GM23248 (cell line): ENCODE measurements at regions of chr1 and their contacts with region 1.

Region 1: DNA sequence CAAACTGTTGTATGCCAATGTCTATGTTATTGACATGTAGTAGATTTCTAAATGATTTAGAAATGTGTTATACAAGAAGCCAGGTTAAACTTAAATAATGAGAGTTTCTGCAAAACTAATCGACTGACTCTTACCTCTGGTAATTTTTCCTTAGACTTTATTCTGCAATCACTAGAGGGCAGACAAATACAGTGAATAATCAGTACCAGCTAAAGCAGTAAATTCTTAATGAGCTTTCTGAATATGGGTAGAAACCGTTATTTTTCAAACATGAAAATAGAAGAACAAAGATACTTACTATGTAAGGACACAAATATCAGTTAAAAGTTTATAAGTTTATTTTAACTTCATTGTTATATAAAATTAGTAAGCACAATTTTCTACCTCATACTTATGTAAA is 97.9 kb upstream of the RGS1 start:
- DNase-seq: peak; percentile 70
- H3K4me3 ChIP-seq: no peak overlapping the region
- H3K27ac ChIP-seq: no peak overlapping the region
- H3K4me1 ChIP-seq: peaks cover 13% of the 10 kb centered on the region
- H3K27me3 ChIP-seq: no peaks in the 10 kb centered on the region; the same call in 1 of the 2 replicates

Region 2: DNA sequence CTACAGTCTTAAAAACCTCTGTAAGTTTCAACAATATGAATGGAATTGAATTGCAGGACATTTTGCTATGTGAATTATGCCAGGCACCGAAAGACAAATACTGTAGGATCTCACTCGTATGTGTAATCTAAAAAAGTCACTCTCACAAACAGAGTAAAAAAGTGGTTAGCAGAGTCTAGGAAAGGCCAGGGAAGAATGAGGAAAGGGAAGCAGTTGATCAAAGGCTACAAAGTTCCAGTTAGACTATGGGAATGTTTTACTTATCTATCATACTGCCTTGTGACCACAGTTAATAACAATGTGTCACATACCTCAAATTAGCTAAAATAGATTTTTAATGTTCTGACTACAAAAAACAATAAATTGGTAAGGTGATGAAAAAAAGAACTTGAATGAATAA is 1434.6 kb before region 1 on chr1:
- in situ Hi-C with region 1: no loop called
- DNase-seq: no peak
- H3K4me3 ChIP-seq: no peak overlapping the region
- H3K27ac ChIP-seq: no peak overlapping the region
- H3K4me1 ChIP-seq: no peaks in the 10 kb centered on the region
- H3K27me3 ChIP-seq: no peaks in the 10 kb centered on the region

Region 3: DNA sequence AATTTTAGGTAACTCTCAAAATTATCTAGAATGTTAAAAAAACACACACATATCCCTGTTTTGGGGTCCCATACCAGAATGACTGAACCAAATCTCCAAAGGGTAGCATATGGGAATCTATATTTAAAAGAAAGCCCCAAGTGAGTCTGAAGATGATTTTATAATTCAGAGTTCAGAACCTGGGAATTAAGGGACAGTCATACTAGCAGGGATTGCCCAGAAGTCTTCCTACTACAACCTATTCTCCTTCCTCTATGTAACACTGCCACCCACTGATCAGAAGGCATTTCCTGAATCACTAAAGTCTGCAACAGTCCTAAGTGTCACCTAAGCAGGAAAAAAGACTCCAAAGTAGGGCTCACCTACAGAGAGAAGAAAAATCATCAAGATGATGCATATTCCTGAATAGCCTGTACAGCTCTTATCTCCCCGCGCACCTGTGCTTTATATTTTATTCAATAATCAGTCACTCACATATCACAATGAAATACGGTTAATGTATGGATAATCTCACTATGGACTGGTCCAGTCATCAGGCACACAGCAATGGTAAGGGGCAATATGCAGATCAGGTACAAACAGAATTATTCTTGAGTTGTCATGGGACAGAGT is 102.8 kb after region 1 on chr1:
- in situ Hi-C with region 1: loop called (anchors 10 kb)
- DNase-seq: peak; percentile 75
- H3K4me3 ChIP-seq: no peak overlapping the region
- H3K27ac ChIP-seq: no peak overlapping the region
- H3K4me1 ChIP-seq: peaks cover 10% of the 10 kb centered on the region
- H3K27me3 ChIP-seq: no peaks in the 10 kb centered on the region

Region 4: DNA sequence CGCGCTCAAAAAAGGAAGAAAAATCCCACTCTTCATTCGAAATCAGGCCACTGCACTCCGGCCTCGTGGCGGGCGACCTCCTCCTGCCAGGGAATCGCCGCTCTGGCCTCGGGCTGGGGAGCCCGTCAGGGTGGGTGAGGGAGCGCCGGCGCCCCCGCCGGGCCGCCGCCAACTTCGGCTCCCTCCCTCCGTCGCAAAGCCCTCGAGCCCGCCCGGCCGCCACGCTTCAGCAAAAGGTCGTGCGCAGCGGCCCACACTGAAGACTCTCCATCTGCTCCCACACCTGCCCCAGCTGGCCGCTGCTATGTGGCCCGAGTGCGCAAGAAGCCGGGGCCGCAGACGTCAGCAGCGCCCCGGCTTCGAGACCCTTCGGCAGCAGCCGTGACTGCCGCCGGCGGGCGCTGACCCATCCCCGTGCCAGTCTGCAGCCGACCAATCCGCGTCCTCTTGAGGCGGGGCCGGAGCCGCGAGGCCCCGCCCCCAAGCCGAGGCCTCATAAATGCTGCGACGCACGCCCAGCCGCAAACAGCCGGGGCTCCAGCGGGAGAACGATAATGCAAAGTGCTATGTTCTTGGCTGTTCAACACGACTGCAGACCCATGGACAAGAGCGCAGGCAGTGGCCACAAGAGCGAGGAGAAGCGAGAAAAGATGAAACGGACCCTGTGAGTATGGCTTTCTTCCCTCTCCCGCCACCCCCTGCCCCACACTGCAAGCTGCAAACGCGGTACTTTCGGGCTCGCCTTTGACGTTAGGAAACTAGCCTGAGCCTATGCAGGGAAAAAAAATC is 331.1 kb after region 1 on chr1 and contains the start of gene RGS2:
- in situ Hi-C with region 1: loop called (anchors 10 kb)
- DNase-seq: peak; percentile 95
- H3K4me3 ChIP-seq: peak within 1 kb of the TSS; percentile 99
- H3K27ac ChIP-seq: peak within 1 kb of the TSS; percentile 59
- H3K4me1 ChIP-seq: peaks cover 23% of the 10 kb centered on the region
- H3K27me3 ChIP-seq: no peaks in the 10 kb centered on the region
- total RNA-seq, gene RGS2: 0.38 and 0.43 TPM in 2 replicates

Region 5: GRCh38 chr1:193031438-193031837 is 553.8 kb after region 1 on chr1:
- in situ Hi-C with region 1: loop called (anchors 10 kb)
- DNase-seq: peak; percentile 49
- H3K4me3 ChIP-seq: no peak overlapping the region
- H3K27ac ChIP-seq: no peak overlapping the region
- H3K4me1 ChIP-seq: no peaks in the 10 kb centered on the region
- H3K27me3 ChIP-seq: no peaks in the 10 kb centered on the region